PC-3 (cell line): ENCODE measurements at regions of chrX and their contacts with region 1.

Region 1: DNA sequence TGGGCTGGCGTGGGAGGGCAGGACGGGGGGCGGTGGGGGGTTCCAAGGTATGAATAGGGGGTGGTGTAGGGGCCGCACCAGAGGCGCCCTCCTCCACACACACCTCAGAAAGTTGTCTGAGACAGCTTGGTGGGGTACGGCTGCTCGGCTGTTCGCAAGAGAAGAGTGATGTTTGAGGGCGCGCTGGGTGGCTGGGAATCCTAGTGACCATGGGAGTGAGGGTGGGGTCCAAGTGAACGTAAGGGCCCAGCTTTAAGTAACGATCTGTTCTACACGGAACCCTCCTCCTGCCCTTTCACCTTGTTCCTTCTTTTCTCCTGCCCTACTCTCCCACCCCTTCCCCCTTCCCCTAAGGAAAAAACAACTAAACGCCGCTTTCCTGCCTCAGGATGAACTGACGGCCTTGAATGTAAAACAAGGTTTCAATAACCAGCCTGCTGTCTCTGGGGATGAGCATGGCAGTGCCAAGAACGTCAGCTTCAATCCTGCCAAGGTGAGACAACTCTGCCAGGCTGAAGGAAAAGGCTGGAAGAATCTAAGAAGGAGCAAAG is 664 bp downstream of the MED12 start:
- DNase-seq: no peak
- ATAC-seq: peak; percentile 35
- H3K4me3 ChIP-seq: peak overlapping the region; percentile 94
- H3K27ac ChIP-seq: no peak overlapping the region
- H3K4me1 ChIP-seq: peaks cover 9% of the 10 kb centered on the region; the same call in 1 of the 2 replicates
- H3K27me3 ChIP-seq: no peaks in the 10 kb centered on the region
- CTCF ChIP-seq: no peak

Region 2: GRCh38 chrX:71068049-71068763 is 50.9 kb before region 1 on chrX and contains the start of gene SNX12:
- CTCF ChIA-PET with region 1: no interaction called
- POLR2A ChIA-PET with region 1: interaction called, 13 read pairs
- intact Hi-C with region 1: no loop called
- DNase-seq: peak; percentile 92
- ATAC-seq: peak; percentile 92
- H3K4me3 ChIP-seq: peak within 1 kb of the TSS; percentile 81
- H3K27ac ChIP-seq: peak within 1 kb of the TSS; percentile 66
- H3K4me1 ChIP-seq: peaks cover 16% of the 10 kb centered on the region
- H3K27me3 ChIP-seq: no peaks in the 10 kb centered on the region
- CTCF ChIP-seq: no peak
- total RNA-seq, gene SNX12: 43.9 and 48.4 TPM in 2 replicates

Region 3: DNA sequence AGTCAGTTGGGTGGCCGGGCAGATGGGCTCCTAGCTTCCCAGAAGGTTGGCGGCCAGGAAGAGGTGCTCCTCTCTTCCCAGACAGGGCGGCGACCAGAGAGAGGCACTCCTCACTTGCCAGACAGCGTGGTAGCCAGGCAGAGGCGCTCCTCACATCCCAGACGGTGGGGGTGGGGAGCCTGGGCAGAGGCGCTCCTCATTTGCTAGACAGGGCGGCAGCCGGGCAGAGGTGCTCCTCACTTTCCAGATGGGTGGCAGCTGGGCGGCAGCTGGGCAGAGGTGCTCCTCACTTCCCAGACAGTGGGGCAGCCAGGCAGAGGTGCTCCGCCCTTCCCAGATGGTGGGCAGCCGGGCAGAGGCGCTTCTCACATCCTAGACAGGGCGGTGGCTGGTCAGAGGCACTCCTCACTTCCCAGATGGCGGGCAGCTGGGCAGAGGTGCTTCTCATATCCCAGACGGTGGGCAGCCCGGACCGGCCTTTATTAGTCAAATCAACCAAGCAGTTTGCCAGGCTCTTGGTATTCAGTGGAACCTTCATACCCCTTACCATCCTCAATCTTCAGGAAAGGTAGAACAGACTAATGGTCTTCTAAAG is 150.8 kb after region 1 on chrX:
- CTCF ChIA-PET with region 1: no interaction called
- POLR2A ChIA-PET with region 1: no interaction called
- intact Hi-C with region 1: no loop called
- DNase-seq: no peak
- ATAC-seq: no peak
- H3K4me3 ChIP-seq: no peak overlapping the region
- H3K27ac ChIP-seq: no peak overlapping the region
- H3K4me1 ChIP-seq: no peaks in the 10 kb centered on the region
- H3K27me3 ChIP-seq: no peaks in the 10 kb centered on the region
- CTCF ChIP-seq: no peak